ENCODE measurements at regions of chr12 and their contacts with region 1.

Region 1: DNA sequence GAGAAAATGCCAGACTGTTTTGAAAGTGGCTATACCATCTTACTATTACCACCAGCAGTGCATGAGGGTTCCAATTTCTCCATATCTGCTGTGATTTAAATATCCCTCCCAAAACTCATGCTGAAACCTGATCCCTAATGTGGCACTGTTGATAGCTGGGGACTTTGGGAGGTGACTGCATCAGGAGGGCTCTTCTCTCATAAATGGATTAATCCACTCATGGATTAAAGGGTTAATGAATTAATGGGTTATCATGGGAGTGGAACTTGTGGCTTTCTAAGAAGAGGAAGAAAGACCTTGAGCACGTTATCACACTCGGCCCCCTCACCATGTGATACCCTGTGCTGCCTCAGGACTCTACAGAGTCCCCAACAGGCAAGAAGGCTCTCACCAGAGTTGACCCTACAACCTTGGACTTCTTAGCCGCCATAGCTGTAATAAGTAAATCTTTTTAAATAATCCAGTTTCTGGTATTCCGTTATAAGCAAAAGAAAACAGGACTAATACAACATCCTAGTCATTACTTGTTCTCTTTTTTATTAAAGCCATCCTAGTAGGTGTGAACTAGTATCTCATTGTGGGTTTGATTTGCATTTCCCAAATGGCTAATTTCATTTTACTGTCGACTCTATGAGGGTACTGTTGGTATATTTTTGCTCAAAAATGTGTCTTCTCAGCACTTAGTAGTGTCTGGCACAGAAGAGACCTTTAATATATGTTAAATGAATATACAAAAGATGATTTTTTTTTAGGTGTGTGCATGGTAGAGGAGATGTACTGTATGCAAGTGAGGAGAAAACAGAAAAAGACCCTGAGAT is 14.3 kb downstream of the PPP1R12A start:
- DNase-seq: no peak
- ATAC-seq: no peak
- H3K4me3 ChIP-seq: no peak overlapping the region
- H3K27ac ChIP-seq: peak overlapping the region in 1 of 2 donors; percentile 5
- H3K4me1 ChIP-seq: peaks cover 0 to 5% of the 10 kb centered on the region in 2 donors
- H3K27me3 ChIP-seq: no peaks in the 10 kb centered on the region

Region 2: DNA sequence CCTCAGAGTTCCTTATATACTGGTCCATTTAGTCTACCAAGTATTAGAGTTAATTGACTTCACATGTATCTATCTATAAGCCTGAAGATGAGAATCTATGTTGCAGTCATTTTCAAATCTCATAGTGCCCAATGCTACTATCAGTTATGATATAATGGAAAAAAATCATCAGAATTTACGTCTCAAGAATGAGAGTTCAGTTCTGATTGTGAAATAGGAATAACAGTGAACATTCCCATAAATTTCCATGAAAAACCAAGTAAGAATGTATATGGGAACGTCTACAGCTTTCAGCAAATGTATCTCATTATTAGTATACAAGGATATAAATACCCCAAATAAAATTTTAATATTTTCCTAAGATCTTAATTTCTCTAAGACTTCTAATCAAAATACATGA is 63.0 kb before region 1 on chr12:
- intact Hi-C with region 1: loop called in 1 of 2 experiments (anchors 2 kb)
- DNase-seq: no peak
- ATAC-seq: no peak
- H3K4me3 ChIP-seq: no peak overlapping the region
- H3K27ac ChIP-seq: no peak overlapping the region
- H3K4me1 ChIP-seq: peaks cover 0 to 2% of the 10 kb centered on the region in 2 donors
- H3K27me3 ChIP-seq: no peaks in the 10 kb centered on the region

Region 3: DNA sequence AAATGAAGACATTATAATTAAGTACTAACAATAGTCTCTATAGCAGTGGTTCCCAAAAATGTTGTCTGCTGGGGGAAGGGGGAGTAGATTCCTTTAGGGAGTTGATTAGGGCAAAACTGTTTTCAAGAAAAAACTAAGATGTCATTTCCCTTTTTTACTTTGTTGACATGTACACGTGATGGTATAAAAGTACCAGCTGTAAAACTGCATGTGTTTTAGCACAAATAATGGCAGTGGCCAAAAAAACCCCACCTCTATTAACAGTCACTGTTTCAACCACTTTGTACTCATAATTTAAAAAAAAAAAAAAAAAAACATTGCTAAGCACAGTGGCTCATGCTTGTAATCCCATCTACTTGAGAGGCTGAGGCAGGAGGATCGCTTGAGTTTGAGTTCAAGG is 47.4 kb before region 1 on chr12:
- intact Hi-C with region 1: no loop called
- DNase-seq: no peak
- ATAC-seq: no peak
- H3K4me3 ChIP-seq: no peak overlapping the region
- H3K27ac ChIP-seq: no peak overlapping the region
- H3K4me1 ChIP-seq: peaks cover 2 to 6% of the 10 kb centered on the region in 2 donors
- H3K27me3 ChIP-seq: no peaks in the 10 kb centered on the region

Region 4: GRCh38 chr12:79886917-79887519 is 33.6 kb before region 1 on chr12:
- intact Hi-C with region 1: loop called in 1 of 2 experiments (anchors 5 kb)
- DNase-seq: no peak
- ATAC-seq: peak; percentile 74
- H3K4me3 ChIP-seq: no peak overlapping the region
- H3K27ac ChIP-seq: no peak overlapping the region
- H3K4me1 ChIP-seq: peaks cover 8% of the 10 kb centered on the region in 2 donors
- H3K27me3 ChIP-seq: no peaks in the 10 kb centered on the region

Region 5: GRCh38 chr12:80778005-80778541 is 857.4 kb after region 1 on chr12:
- intact Hi-C with region 1: no loop called
- DNase-seq: peak in 1 of 2 donors; percentile 59
- ATAC-seq: peak; percentile 79
- H3K4me3 ChIP-seq: no peak overlapping the region
- H3K27ac ChIP-seq: peak overlapping the region; percentile 43 to 57
- H3K4me1 ChIP-seq: peaks cover 0 to 4% of the 10 kb centered on the region in 2 donors
- H3K27me3 ChIP-seq: no peaks in the 10 kb centered on the region

Measured in aorta (tissue), 5 donors.